ENCODE measurements at regions of chr19 and their contacts with region 1.

Region 1: GRCh38 chr19:48170038-48170812 is at the starts of genes LIG1 and ZSWIM9:
- DNase-seq: peak; percentile 88 to 98 (median 96)

Region 2: GRCh38 chr19:48203732-48204628 is 33.8 kb after region 1 on chr19:
- intact Hi-C with region 1: loop called (anchors 2 kb)
- DNase-seq: peak; percentile 93 to 99 (median 97)

Measured in head of caudate nucleus (tissue), 42 donors.